ENCODE measurements at regions of chr15 and their contacts with region 1.

Region 1: DNA sequence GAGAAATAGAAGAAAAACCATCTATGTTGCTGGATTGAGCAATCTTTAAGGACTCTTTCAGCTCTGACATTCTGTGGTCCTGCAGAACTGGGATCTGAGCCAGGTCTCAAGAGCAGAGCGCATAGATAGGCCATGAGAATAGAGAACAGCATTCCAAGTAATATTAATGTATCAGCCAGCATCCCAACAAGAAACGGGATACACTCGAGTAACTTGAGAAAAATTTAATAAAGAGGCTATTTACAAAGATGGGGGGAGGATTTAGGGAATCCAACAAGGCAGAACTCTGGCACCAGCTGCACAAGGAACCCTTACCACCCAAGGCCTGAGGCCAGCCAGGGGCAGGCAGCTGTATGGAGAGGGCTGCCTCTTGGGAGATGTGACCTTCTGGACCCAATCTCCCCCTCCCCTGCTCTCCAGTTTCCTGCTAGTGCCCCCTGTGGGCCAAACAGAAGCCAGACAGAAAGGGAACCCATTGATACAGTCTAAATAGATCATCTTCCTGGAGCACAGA is 8.2 kb downstream of the TMOD2 start:
- DNase-seq: peak; percentile 75 to 85 (median 75)
- ATAC-seq: peak; percentile 92
- H3K4me3 ChIP-seq: no peak overlapping the region
- H3K27ac ChIP-seq: peak overlapping the region; percentile 84
- H3K4me1 ChIP-seq: peaks cover 15% of the 10 kb centered on the region
- H3K27me3 ChIP-seq: no peaks in the 10 kb centered on the region

Region 2: DNA sequence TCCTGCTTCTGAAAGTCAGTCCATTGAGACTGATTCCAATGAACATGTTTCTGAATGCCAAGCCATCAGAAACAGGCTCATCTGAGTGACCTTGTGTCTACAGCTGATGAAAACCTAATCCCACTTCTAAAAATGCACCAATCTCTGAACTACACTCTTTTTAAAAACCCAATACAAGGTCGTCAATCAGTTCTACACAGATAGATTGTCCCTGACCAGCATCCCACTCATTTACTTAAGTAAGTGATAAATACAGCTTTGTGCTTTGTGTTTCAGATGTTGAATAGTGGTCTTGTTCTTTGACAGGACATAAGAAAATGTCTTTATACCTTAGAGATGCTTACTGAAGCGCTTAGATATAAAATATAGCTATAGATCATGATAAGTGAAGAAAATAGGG is 98.5 kb before region 1 on chr15:
- intact Hi-C with region 1: loop called in 1 of 4 experiments (anchors 5 kb)
- DNase-seq: no peak
- ATAC-seq: no peak
- H3K4me3 ChIP-seq: no peak overlapping the region
- H3K27ac ChIP-seq: no peak overlapping the region
- H3K4me1 ChIP-seq: no peaks in the 10 kb centered on the region
- H3K27me3 ChIP-seq: no peaks in the 10 kb centered on the region

Region 3: GRCh38 chr15:51718219-51718618 is 41.4 kb before region 1 on chr15:
- intact Hi-C with region 1: loop called in 1 of 4 experiments (anchors 5 kb)
- DNase-seq: no peak
- ATAC-seq: no peak
- H3K4me3 ChIP-seq: no peak overlapping the region
- H3K27ac ChIP-seq: no peak overlapping the region
- H3K4me1 ChIP-seq: peaks cover 7% of the 10 kb centered on the region
- H3K27me3 ChIP-seq: no peaks in the 10 kb centered on the region

Measured in right cardiac atrium (tissue), 5 donors.